Dorsolateral prefrontal cortex (tissue), 120 donors: ENCODE measurements at regions of chr16 and their contacts with region 1.

Region 1: GRCh38 chr16:2047330-2048115 is at the starts of genes NTHL1 and TSC2:
- DNase-seq: peak; percentile 97 to 99 (median 98)
- H3K4me3 ChIP-seq: peak within 1 kb of the TSS; percentile 62 to 100 (median 93)
- H3K27ac ChIP-seq: peak within 1 kb of the TSS in 56 of 59 donors; percentile 5 to 87 (median 72)
- H3K27me3 ChIP-seq: no peaks in the 10 kb centered on the region
- CTCF ChIP-seq: peak; percentile 25 to 93 (median 78)
- total RNA-seq, gene NTHL1: 12.2 to 41.4 (median 26.0) TPM
- total RNA-seq, gene TSC2: 129 to 311 (median 193) TPM

Region 2: DNA sequence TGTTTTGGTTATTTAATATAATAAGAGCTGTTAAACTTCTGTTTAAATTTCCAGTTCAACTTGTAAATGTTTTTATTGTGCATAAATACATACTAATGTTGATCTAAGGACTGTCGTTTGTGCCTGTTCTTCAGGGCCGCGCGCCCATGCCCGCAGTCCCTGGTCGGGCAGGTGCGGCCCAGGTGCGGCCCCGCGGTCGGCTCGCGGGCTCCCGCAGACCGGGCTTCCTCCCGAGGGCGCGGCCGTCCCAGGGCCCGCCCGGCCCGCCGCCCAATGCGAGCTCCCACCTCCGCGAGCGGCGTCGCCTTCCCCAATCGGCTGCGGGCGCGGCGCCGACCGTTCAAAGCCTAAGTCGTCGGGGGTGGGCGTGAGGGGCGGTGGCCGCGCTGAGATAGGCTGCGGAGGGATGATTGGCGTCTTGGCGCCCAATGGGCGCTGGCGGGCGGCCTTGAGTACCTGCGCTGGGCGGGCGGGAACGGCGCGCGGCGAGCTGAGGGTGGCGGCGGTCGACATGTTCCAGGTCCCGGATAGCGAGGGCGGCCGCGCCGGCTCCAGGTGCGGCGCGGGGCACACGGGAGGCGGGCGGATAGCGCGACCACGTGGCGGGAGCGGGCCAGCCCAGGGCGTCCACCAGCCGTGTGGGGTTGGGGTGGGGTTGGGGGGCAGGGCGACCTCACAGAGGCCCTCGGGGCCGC is 369.6 kb before region 1 on chr16 and contains the start of gene JPT2:
- intact Hi-C with region 1: no loop called
- DNase-seq: peak; percentile 90 to 98 (median 95)
- H3K4me3 ChIP-seq: peak within 1 kb of the TSS; percentile 40 to 88 (median 72)
- H3K27ac ChIP-seq: peak within 1 kb of the TSS in 36 of 59 donors; percentile 7 to 82 (median 42)
- H3K27me3 ChIP-seq: no peaks in the 10 kb centered on the region
- CTCF ChIP-seq: peak in 19 of 56 donors; percentile 6 to 37 (median 17)
- total RNA-seq, gene JPT2: 7.1 to 57.9 (median 18.9) TPM

Region 3: DNA sequence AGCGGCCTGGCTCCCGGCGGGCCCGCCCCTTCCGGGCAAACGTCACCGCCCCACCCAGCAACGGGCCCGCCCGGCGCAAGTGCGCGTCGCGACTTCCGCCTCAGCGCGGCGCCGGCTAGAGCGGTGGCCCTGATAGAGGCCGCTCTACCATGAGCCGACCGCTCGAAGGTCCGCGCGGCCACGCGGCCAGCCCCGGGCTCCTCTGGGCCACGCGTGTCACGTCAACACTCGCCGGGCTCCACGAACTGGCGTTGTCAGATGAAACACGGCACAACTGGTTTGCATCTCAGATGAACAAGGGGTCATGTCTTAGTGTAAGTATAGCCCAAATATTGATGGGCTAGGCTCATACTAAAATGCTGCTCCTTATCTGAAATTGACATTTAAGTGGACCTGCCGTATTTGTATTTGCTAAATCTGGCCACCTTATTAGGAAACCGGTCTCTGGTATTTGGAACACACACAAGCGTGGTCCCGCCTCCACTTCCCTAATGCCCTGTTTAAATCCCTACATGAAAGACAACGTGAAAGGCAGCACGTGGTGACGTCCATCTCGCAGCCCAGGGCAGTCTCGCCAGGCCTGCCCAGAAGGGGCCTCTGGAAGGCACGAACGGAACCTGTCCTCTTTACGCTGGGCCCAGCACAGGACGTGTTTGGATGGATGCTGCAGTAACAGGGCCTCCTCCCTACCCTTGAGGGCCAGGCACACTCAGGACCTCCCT is 37.6 kb before region 1 on chr16 and contains the start of gene ZNF598:
- intact Hi-C with region 1: loop called in 1 of 2 experiments (anchors 5 kb)
- DNase-seq: peak; percentile 65 to 92 (median 80)
- H3K4me3 ChIP-seq: peak within 1 kb of the TSS; percentile 65 to 99 (median 87)
- H3K27ac ChIP-seq: peak within 1 kb of the TSS in 57 of 59 donors; percentile 24 to 93 (median 83)
- H3K27me3 ChIP-seq: no peaks in the 10 kb centered on the region
- CTCF ChIP-seq: peak in 36 of 56 donors; percentile 8 to 59 (median 30)
- total RNA-seq, gene ZNF598: 16.4 to 45.4 (median 29.2) TPM